Calu3 (cell line): ENCODE measurements at regions of chr3 and their contacts with region 1.

Region 1: DNA sequence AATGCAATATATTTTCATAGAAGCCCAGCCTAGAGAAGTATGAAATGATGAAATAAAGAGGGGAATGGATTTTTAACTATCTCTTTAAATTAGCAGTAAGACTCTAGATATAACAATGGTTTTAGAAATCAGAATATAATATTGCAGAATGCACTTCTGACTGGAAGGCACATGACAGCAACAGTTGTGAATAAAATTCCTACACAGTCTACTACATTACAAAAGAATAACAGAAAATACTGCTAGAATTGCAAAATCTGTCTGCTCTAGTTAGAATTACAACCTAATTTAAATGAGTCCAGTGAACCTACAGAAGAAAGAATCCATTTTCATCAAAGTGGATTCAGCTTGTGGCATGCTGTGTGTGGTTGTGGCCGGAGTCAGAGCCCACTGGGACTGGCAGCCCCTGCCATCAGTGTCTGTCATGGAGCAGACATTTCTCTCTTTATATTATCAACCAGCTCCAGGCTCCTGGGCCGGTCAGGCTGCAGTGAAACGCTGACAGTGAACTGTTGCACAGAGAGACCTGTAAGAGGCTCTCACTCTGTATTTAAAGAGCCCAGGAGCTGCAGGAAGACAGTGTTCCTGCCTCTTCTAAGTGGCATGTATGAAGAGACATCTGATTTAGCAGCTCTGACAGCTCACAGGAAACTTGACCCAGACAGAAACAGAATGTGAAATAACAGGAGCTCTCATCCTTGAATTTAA is 1523.8 kb upstream of the CADM2 start:
- DNase-seq: peak; percentile 5
- H3K4me3 Mint-ChIP-seq: no peak overlapping the region
- H3K27ac Mint-ChIP-seq: no peak overlapping the region
- H3K4me1 Mint-ChIP-seq: no peaks in the 10 kb centered on the region
- H3K27me3 Mint-ChIP-seq: no peaks in the 10 kb centered on the region
- CTCF ChIP-seq: no peak

Region 2: DNA sequence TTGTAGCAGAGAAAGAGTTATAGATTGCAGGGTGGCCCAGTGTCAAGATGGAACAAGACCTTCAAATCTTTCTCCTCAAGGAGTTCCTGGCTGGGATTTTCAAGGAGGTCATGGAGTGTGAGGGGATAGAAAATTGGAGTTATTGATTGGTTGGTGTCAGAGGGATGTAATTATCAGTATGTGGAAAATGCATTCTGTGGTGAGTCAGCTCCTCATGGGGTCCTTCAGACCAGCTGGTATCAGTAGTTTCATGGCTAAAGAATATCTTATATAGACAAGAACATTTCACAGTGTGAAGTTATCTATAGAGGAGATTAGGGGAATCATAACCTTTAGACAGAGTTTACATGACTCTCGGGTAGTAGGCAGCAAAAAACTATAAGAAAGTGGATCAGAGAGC is 559.6 kb before region 1 on chr3:
- CTCF ChIA-PET with region 1: no interaction called
- intact Hi-C with region 1: loop called (anchors 5 kb)
- DNase-seq: no peak
- H3K4me3 Mint-ChIP-seq: no peak overlapping the region
- H3K27ac Mint-ChIP-seq: no peak overlapping the region
- H3K4me1 Mint-ChIP-seq: no peaks in the 10 kb centered on the region
- H3K27me3 Mint-ChIP-seq: no peaks in the 10 kb centered on the region
- CTCF ChIP-seq: no peak